Motor neuron (in vitro differentiated cells): ENCODE measurements at regions of chr16 and their contacts with region 1.

Region 1: DNA sequence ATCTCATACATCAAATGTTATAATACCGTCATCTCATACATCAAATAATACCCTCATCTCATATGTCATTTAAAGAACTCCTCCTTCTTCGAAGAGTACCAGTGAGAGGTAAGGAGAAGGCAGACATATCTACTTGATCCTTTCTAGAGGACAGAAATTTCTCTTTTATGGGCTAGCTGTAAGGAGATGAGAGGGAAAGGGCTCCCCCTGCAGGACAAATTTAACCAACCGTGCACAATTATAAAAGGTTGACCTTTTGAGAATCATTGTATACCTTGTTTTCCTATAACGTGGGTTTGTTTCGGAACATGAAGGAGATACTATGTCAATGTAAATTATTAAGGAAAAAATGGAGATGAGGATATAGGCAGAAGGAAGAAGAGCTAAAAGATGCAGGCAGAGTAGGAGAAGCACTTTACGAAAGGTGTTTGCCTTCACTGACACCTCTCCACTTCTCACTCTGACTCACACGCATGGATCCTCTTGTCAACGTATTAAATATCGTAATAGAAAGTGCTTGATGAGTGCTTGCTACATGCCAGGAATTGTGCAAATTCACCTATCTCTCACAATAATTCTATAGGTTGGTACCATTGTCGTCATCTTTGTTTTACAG is 465.9 kb upstream of the ERCC4 start:
- ATAC-seq: peak in 3 of 8 experiments; percentile 30 to 38 (median 36)
- H3K4me3 ChIP-seq: no peak overlapping the region
- H3K27ac ChIP-seq: no peak overlapping the region
- H3K4me1 ChIP-seq: peaks cover 0 to 9% of the 10 kb centered on the region in 2 donors

Region 2: GRCh38 chr16:12455287-12455798 is 998.7 kb before region 1 on chr16:
- in situ Hi-C with region 1: loop called in 1 of 9 experiments (anchors 25 kb)
- ATAC-seq: peak; percentile 92 to 100 (median 94)
- H3K4me3 ChIP-seq: no peak overlapping the region
- H3K27ac ChIP-seq: no peak overlapping the region
- H3K4me1 ChIP-seq: no peaks in the 10 kb centered on the region

Region 3: DNA sequence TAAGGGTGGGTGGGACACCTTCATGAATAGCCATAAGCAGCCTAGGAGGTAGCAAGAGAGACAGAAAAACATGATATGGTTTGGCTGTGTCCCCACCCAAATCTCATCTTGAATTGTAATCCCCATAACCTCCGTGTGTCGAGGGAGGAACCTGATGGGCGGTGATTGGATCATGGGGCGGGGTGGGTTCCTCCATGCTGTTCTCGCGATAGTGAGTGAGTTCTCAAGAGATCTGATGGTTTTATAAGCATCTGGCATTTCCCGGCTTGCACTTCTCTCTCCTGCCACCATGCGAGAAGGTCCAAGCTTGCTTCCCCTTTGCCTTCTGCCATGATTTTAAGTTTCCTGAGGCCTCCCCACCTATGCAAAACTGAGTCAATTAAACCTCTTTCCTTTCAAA is 206.8 kb after region 1 on chr16:
- in situ Hi-C with region 1: no loop called
- ATAC-seq: no peak
- H3K4me3 ChIP-seq: no peak overlapping the region
- H3K27ac ChIP-seq: no peak overlapping the region
- H3K4me1 ChIP-seq: no peaks in the 10 kb centered on the region